ENCODE measurements at regions of chr12 and their contacts with region 1.

Region 1: DNA sequence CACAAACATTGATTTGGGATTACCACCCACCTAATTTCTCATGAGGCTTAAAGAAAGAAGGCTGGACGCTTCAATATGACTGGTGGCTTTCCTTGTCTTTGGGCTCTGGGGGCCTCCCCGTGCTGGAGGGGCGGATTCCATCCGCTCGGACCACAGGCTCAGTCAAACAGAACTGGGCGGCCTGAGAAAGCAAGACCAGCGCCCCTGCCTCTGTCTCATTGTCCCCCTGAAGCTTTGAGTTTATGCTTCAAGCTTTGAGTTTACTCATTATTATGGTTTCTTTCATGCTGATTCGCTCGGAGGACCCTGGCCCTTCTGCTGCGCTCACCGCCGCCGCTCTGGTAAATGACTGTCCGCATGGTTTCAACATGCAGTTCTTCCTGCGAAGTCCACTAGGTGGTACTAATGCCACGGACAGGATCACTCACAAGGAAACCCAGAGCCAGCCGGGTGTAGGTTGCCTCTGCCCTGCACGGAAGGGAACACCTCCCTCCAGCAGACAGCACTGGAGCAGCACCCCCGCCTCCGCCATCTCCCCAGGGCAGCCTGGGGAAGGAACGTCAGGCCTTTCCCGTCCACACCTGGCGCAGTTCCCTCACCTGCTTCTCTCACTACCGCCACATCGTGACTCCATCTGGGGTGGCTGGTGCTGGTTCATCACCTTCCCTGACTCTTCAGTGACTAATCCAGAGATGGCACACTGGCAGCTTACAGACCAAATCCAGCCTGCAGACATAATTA is 13.2 kb upstream of the TIGAR start:
- DNase-seq: peak; percentile 95 to 97
- H3K4me3 ChIP-seq: peak overlapping the region; percentile 28
- H3K4me3 Mint-ChIP-seq: peak overlapping the region; percentile 69
- H3K27ac Mint-ChIP-seq: peak overlapping the region; percentile 98
- H3K4me1 ChIP-seq: peaks cover 34% of the 10 kb centered on the region
- H3K4me1 Mint-ChIP-seq: peaks cover 43% of the 10 kb centered on the region
- H3K27me3 ChIP-seq: no peaks in the 10 kb centered on the region
- H3K27me3 Mint-ChIP-seq: no peaks in the 10 kb centered on the region
- CTCF ChIP-seq: peak; percentile 91 to 92

Region 2: DNA sequence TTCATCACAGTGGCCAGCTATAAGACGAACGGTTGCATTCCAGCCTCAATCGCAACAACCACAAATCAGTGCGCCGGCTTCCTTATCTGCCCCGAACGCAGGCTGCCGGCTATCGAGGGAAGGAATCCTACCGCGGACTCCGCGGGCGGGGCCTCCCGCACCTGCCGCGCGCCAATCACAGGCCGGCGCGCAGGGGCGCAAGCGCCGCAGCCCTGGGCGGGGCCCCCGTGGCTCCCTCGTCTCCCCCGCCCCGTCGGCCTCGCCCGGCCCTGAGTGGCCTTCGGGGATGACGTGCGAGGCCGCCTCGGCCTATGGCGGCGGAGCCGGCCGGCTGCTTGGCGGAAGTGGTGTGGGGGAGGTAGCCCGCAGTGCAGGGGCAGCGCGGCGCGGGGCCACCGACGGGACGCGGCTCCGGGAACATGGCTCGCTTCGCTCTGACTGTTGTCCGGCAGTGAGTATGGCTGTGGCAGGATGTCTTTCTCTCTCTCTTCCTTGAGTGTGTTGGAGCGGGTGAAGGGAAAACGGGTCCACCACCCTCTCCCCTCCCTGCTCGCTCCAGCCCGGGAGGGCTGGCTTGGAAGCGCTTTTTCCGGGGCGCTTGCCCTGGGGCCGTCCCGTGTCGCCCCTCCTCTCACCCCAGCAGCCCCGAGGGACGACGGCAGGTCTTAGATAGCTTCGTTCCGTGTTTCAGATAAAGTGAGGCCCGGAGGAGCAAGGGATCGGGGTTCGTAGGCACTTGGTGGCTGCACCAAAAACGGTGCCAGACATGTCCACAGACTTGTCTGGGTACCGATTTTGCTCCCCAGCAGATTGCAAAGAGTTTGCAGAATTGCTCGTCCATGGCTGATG is 13.3 kb after region 1 on chr12 and contains the start of gene TIGAR:
- CTCF ChIA-PET with region 1: interaction called, 3 read pairs
- POLR2A ChIA-PET with region 1: no interaction called
- intact Hi-C with region 1: loop called (anchors 1 kb)
- DNase-seq: peak; percentile 95 to 99
- H3K4me3 ChIP-seq: peak within 1 kb of the TSS; percentile 70
- H3K4me3 Mint-ChIP-seq: peak within 1 kb of the TSS; percentile 89
- H3K27ac Mint-ChIP-seq: peak within 1 kb of the TSS; percentile 91
- H3K4me1 ChIP-seq: peaks cover 15% of the 10 kb centered on the region
- H3K4me1 Mint-ChIP-seq: peaks cover 16% of the 10 kb centered on the region
- H3K27me3 ChIP-seq: no peaks in the 10 kb centered on the region
- H3K27me3 Mint-ChIP-seq: no peaks in the 10 kb centered on the region
- CTCF ChIP-seq: no peak
- total RNA-seq, gene TIGAR: 36.7 and 42.7 TPM in 2 replicates

Region 3: DNA sequence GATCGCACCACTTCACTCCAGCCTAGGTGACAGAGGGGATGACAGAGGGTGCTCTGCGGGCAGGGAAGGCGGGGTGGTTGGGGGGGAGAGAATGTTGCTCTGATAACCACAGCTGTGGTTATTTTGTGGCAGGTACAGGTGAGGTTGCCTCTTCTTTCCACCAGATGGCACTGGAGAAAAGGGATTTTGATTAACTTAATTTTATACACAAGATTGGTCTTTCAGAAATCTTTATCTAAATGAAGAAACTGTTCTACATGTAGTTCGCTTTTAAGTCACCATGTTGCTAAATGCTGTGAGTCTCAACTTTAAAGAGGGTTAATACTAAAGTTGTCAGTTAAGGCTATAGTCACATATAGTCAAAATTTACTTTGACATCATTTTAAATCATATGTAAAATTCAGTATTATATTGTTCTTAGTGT is 46.0 kb after region 1 on chr12:
- CTCF ChIA-PET with region 1: no interaction called
- POLR2A ChIA-PET with region 1: no interaction called
- intact Hi-C with region 1: loop called (anchors 5 kb)
- DNase-seq: peak in 1 of 2 experiments; percentile 27
- H3K4me3 ChIP-seq: no peak overlapping the region
- H3K4me3 Mint-ChIP-seq: no peak overlapping the region
- H3K27ac Mint-ChIP-seq: no peak overlapping the region
- H3K4me1 ChIP-seq: no peaks in the 10 kb centered on the region
- H3K4me1 Mint-ChIP-seq: no peaks in the 10 kb centered on the region
- H3K27me3 ChIP-seq: no peaks in the 10 kb centered on the region
- H3K27me3 Mint-ChIP-seq: no peaks in the 10 kb centered on the region
- CTCF ChIP-seq: peak; percentile 57 to 67

Region 4: DNA sequence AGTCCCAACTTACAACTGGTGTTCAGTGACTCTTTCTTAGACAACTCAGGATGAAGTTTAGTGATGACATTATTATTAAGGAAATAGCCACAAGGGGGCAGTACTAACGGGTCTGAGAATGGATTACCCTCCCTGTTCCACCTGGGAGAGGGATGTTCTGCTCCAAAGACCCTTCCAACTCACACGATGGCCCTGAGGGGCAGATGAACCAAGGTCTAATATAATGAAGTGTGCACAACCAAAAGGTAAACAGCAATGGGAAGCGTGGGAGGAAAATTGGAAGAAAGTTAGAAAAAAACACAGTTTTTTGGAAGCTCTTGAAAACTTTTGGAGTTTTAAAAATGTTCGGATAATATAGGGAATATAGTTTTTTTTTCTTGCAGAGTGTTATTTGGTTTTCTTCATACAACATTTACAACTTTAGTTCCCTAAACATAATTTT is 113.8 kb after region 1 on chr12:
- CTCF ChIA-PET with region 1: no interaction called
- POLR2A ChIA-PET with region 1: no interaction called
- intact Hi-C with region 1: loop called (anchors 5 kb)
- DNase-seq: peak in 1 of 2 experiments; percentile 74
- H3K4me3 ChIP-seq: no peak overlapping the region
- H3K4me3 Mint-ChIP-seq: no peak overlapping the region
- H3K27ac Mint-ChIP-seq: no peak overlapping the region
- H3K4me1 ChIP-seq: no peaks in the 10 kb centered on the region
- H3K4me1 Mint-ChIP-seq: no peaks in the 10 kb centered on the region
- H3K27me3 ChIP-seq: peaks cover 1% of the 10 kb centered on the region; the same call in 1 of the 2 replicates
- H3K27me3 Mint-ChIP-seq: peaks cover 18% of the 10 kb centered on the region
- CTCF ChIP-seq: peak; percentile 70 to 93

Region 5: DNA sequence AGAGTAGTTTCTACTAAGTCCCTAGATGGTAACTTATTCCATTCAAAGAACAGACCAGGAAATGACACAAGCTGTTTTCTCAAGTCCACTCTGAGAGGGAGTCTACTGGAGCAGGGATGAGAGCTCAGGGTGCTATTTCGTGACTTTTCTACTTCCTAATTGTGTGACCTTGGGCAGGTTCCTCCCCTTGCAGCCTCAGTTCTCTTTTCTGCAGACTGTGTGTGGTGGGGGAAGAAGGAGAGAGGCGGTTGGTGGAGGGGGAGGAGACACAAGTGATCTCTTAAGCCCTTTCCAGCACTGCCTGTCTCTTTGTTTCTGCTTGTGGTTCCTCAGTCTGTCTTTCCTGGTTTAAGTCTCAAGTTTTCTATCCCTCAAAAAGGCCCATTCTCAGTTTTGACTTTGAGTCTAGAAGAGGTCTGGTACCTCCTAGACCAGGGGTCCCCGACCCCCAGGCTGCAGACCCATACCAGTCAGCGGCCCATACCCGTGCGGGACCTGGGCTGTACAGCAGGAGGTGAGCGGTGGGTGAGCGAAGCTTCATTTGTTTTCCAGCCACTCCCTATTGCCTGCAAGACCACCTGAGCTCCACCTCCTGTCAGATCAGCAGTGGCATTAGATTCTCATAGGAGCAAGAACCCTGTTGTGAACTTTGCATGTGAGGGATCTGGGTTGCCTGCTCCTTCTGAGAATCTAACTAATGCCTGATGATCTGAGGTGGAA is 127.1 kb after region 1 on chr12:
- CTCF ChIA-PET with region 1: no interaction called
- POLR2A ChIA-PET with region 1: no interaction called
- intact Hi-C with region 1: loop called (anchors 5 kb)
- DNase-seq: peak in 1 of 2 experiments; percentile 18
- H3K4me3 ChIP-seq: no peak overlapping the region
- H3K4me3 Mint-ChIP-seq: no peak overlapping the region
- H3K27ac Mint-ChIP-seq: no peak overlapping the region
- H3K4me1 ChIP-seq: no peaks in the 10 kb centered on the region
- H3K4me1 Mint-ChIP-seq: no peaks in the 10 kb centered on the region
- H3K27me3 ChIP-seq: no peaks in the 10 kb centered on the region
- H3K27me3 Mint-ChIP-seq: peaks cover 28% of the 10 kb centered on the region
- CTCF ChIP-seq: no peak

Region 6: DNA sequence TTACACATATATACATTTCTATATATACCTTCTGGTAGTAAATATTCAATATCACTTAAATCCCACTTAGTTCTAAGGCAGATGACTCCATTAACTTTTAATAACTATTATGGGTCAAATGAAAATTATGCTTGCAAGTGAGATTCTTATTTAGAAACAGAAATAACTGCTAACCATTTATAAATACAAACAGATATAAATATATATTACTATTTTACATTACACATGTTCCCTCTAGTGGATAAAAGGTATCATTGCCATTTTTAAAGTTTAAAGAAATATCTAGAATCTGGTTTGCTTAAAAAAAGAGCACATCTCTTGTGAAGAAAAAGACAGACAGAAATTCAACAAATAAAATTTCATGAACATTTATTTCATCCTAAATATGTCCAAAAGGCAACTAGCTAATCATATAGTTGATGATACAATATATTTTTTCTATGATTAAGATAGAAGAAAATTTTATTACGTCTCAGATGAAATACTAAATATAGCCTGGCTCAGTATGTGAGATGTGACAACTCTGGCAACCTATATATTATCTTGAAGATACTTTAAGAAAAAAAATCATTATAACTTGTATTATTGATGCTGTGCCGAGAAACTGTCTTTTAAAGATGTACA is 219.3 kb after region 1 on chr12:
- CTCF ChIA-PET with region 1: no interaction called
- POLR2A ChIA-PET with region 1: no interaction called
- intact Hi-C with region 1: loop called (anchors 1 kb)
- DNase-seq: no peak
- H3K4me3 ChIP-seq: no peak overlapping the region
- H3K4me3 Mint-ChIP-seq: no peak overlapping the region
- H3K27ac Mint-ChIP-seq: no peak overlapping the region
- H3K4me1 ChIP-seq: no peaks in the 10 kb centered on the region
- H3K4me1 Mint-ChIP-seq: no peaks in the 10 kb centered on the region
- H3K27me3 ChIP-seq: no peaks in the 10 kb centered on the region
- H3K27me3 Mint-ChIP-seq: no peaks in the 10 kb centered on the region
- CTCF ChIP-seq: peak; percentile 53 to 75

Region 7: DNA sequence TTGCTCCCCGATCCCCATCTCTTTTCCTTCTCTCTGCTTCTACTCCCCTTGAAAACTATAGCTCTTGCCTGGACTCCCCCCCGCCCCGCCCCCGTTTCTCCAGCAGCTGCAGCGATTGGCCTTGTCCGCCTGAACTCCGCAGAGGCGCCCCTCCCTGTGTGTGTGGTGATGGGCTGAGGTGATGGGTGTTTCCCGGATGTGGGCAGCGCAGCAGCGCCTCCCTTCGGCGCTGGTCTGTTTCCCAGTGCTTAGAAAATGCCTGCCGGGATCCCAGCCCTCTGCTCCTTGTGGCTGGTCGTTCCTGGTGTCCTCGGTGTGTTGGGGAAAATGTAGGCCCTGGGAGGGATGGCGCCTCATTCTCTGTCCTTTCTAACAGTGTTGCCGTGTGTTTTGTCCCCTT is 455.8 kb after region 1 on chr12:
- CTCF ChIA-PET with region 1: interaction called, 4 read pairs
- POLR2A ChIA-PET with region 1: no interaction called
- intact Hi-C with region 1: loop called (anchors 1 kb)
- DNase-seq: no peak
- H3K4me3 ChIP-seq: no peak overlapping the region
- H3K4me3 Mint-ChIP-seq: no peak overlapping the region
- H3K27ac Mint-ChIP-seq: no peak overlapping the region
- H3K4me1 ChIP-seq: no peaks in the 10 kb centered on the region
- H3K4me1 Mint-ChIP-seq: no peaks in the 10 kb centered on the region
- H3K27me3 ChIP-seq: no peaks in the 10 kb centered on the region
- H3K27me3 Mint-ChIP-seq: peaks cover 22% of the 10 kb centered on the region
- CTCF ChIP-seq: no peak

Region 8: DNA sequence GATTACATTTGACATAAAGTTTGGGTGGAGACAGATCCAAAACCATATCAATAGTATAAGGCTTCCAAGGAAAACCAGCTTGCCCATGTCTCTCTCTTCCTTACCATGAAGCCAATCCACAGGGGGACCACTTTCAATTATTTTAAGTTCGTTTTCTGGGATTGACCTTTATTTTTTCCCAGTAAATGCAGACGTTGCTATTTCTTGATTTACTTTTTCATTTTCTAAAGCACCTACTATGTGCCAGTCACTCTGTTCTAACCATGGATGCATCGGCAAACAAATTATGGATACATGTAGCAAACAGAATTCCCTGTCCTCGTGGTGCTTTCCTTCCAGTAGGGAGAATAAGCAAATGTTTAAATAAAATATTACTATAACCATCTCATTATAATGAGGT is 536.1 kb after region 1 on chr12:
- CTCF ChIA-PET with region 1: no interaction called
- POLR2A ChIA-PET with region 1: no interaction called
- intact Hi-C with region 1: no loop called
- DNase-seq: no peak
- H3K4me3 ChIP-seq: no peak overlapping the region
- H3K4me3 Mint-ChIP-seq: no peak overlapping the region
- H3K27ac Mint-ChIP-seq: no peak overlapping the region
- H3K4me1 ChIP-seq: no peaks in the 10 kb centered on the region
- H3K4me1 Mint-ChIP-seq: no peaks in the 10 kb centered on the region
- H3K27me3 ChIP-seq: no peaks in the 10 kb centered on the region
- H3K27me3 Mint-ChIP-seq: peaks cover 32% of the 10 kb centered on the region
- CTCF ChIP-seq: no peak